ENCODE measurements at regions of chr12 and their contacts with region 1.

Region 1: DNA sequence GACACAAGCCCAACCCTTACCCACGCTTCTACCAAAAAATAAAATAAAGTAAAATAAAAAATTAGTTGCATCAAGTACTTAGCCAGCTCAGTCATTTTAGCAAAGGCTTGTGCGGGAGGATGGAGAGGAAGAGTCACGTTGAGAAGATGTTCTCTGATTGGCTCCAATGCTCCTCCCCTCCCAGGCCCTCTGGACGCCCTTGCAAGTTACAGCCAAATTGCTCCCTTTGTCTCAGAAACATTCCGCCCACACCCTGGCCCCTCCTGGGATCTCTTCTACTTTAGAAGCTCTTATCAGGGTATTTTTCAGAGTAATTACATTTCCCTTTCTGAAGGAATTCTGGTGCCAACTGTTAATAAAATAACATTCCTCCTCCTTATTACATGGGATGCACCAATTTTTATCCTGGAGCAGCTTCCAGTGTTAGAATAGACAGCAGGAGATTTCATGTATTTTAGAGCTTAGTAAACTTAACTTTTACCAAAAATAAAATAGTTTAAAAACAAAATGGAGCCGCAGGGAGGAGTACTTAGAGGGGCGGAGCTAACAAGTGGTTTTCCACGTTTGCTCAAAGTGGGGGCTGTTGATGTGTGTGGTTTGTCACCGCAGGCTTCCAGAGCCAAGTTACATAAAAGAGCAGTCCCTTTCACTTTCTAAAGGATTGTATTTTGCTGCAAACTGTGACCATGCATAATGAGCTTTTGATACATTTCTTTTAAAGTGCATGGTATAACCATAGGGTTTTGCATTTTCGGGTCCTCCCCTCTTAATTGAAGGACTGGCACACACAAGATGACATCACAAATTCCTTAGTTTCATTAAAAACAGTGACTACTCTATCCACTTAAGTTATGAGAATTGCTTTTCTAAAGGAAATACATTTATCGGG is 71.7 kb upstream of the RAP1B start:
- DNase-seq: no peak
- ATAC-seq: peak; percentile 34; the same call in 1 of the 2 replicates
- H3K4me3 ChIP-seq: no peak overlapping the region
- H3K27ac ChIP-seq: peak overlapping the region; percentile 75
- H3K4me1 ChIP-seq: peaks cover 8% of the 10 kb centered on the region
- H3K27me3 ChIP-seq: no peaks in the 10 kb centered on the region
- CTCF ChIP-seq: no peak

Region 2: GRCh38 chr12:68303850-68304249 is 235.1 kb before region 1 on chr12:
- CTCF ChIA-PET with region 1: no interaction called
- POLR2A ChIA-PET with region 1: no interaction called
- in situ Hi-C with region 1: no loop called
- intact Hi-C with region 1: no loop called
- DNase-seq: no peak
- ATAC-seq: no peak
- H3K4me3 ChIP-seq: no peak overlapping the region
- H3K27ac ChIP-seq: no peak overlapping the region
- H3K4me1 ChIP-seq: no peaks in the 10 kb centered on the region
- H3K27me3 ChIP-seq: no peaks in the 10 kb centered on the region
- CTCF ChIP-seq: no peak

Region 3: GRCh38 chr12:68374307-68374982 is 164.5 kb before region 1 on chr12:
- CTCF ChIA-PET with region 1: no interaction called
- POLR2A ChIA-PET with region 1: interaction called, 13 read pairs
- in situ Hi-C with region 1: no loop called
- intact Hi-C with region 1: no loop called
- DNase-seq: no peak
- ATAC-seq: peak; percentile 64; the same call in 1 of the 2 replicates
- H3K4me3 ChIP-seq: no peak overlapping the region
- H3K27ac ChIP-seq: peak overlapping the region; percentile 71; the same call in 1 of the 2 replicates
- H3K4me1 ChIP-seq: peaks cover 20% of the 10 kb centered on the region
- H3K27me3 ChIP-seq: no peaks in the 10 kb centered on the region
- CTCF ChIP-seq: no peak

Measured in Panc1 (cell line).